ENCODE measurements at regions of chr4 and their contacts with region 1.

Region 1: DNA sequence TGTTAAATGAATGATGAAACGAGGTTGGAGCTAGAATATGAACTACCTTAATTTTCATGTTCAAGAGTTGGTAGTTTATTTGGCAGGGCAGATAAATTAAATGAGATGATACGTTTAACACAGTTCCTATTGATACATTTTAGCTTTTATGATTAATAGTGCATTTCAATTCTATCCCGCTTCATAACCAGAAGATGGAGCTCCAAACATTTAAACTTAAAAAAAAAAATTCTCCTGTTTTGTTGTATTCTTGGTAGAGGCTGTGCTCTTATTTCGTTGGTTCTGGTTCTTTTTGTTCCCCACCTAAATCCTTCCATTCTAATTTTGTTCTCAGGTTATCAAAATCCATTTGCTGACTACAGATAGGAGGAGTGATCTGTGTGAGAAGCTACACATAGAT is 71.8 kb upstream of the PTPN13 start:
- DNase-seq: no peak
- ATAC-seq: no peak
- H3K4me3 ChIP-seq: no peak overlapping the region
- H3K27ac ChIP-seq: no peak overlapping the region
- H3K4me1 ChIP-seq: no peaks in the 10 kb centered on the region
- H3K27me3 ChIP-seq: no peaks in the 10 kb centered on the region
- CTCF ChIP-seq: peak in 1 of 3 experiments; percentile 16; a peak in 1 of 6 replicates
- EP300 ChIP-seq: no peak
- POLR2A ChIP-seq: no peak
- RAD21 ChIP-seq: no peak

Region 2: DNA sequence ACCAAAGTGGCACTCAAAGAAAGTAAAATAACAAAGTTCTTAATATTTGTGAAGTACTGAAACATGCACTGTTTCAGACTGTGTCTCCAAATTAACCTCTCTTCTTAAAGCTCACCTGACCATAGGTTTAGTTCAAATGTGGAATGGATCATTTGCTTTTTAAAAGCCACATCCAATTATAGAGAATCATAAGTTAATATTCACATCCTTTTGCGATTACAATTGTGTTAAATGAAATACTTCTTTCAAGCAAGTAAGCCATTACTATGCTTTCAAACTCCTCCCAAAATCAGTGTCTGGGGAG is 23.5 kb before region 1 on chr4:
- CTCF ChIA-PET with region 1: no interaction called
- POLR2A ChIA-PET with region 1: no interaction called
- in situ Hi-C with region 1: no loop called
- intact Hi-C with region 1: no loop called
- DNase-seq: no peak
- ATAC-seq: no peak
- H3K4me3 ChIP-seq: no peak overlapping the region
- H3K27ac ChIP-seq: no peak overlapping the region
- H3K4me1 ChIP-seq: no peaks in the 10 kb centered on the region
- H3K27me3 ChIP-seq: no peaks in the 10 kb centered on the region
- CTCF ChIP-seq: no peak; a peak in 1 of 6 replicates
- EP300 ChIP-seq: no peak
- POLR2A ChIP-seq: no peak
- RAD21 ChIP-seq: no peak

Region 3: DNA sequence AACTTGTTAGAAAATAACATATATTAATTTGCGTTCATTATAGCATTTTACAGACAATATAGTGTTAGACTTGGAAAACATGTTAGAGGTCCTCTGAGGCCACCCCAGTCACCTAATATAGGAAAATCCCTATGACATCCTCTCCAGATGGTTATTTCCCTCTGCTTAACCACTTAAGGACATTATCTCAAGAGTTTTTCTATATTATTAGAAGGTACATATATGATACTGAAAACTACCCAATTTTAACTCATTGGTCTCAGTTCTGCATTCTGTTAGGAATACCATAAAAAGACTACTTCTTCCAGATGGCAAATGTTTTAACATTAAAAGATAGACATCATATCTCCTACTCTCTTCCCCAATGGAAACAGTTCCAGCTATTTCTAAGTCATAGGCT is 93.2 kb after region 1 on chr4:
- CTCF ChIA-PET with region 1: no interaction called
- POLR2A ChIA-PET with region 1: no interaction called
- in situ Hi-C with region 1: no loop called
- intact Hi-C with region 1: no loop called
- DNase-seq: no peak
- ATAC-seq: no peak
- H3K4me3 ChIP-seq: no peak overlapping the region
- H3K27ac ChIP-seq: no peak overlapping the region
- H3K4me1 ChIP-seq: no peaks in the 10 kb centered on the region
- H3K27me3 ChIP-seq: no peaks in the 10 kb centered on the region
- CTCF ChIP-seq: no peak
- EP300 ChIP-seq: no peak
- POLR2A ChIP-seq: no peak
- RAD21 ChIP-seq: no peak

Region 4: GRCh38 chr4:87043044-87043820 is 520.9 kb after region 1 on chr4:
- CTCF ChIA-PET with region 1: no interaction called
- POLR2A ChIA-PET with region 1: no interaction called
- in situ Hi-C with region 1: no loop called
- intact Hi-C with region 1: no loop called
- DNase-seq: no peak
- ATAC-seq: peak; percentile 30
- H3K4me3 ChIP-seq: no peak overlapping the region
- H3K27ac ChIP-seq: no peak overlapping the region
- H3K4me1 ChIP-seq: peaks cover 7 to 34% of the 10 kb centered on the region in 2 experiments; a peak in 4 of 5 replicates
- H3K27me3 ChIP-seq: no peaks in the 10 kb centered on the region
- CTCF ChIP-seq: no peak
- EP300 ChIP-seq: no peak
- POLR2A ChIP-seq: no peak
- RAD21 ChIP-seq: no peak

Region 5: DNA sequence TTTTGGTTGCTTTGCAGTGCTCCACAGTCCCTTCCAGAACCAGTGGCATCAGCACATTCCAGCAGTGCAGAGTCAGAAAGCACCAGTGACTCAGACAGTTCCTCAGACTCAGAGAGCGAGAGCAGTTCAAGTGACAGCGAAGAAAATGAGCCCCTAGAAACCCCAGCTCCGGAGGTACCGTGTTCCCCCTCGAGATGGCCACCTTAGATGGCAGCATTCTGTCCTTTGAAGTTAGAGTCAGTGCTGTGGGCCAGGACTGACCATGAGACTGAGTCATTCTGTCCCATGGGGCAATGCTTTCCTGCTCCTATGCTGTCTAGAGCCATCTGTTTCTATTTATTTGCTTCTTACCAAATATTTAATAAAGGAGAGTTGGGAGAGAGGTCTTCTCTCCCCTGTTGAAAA is 585.8 kb after region 1 on chr4:
- CTCF ChIA-PET with region 1: no interaction called
- POLR2A ChIA-PET with region 1: no interaction called
- in situ Hi-C with region 1: loop called (anchors 25 kb)
- intact Hi-C with region 1: no loop called
- DNase-seq: no peak
- ATAC-seq: peak; percentile 68
- H3K4me3 ChIP-seq: no peak overlapping the region
- H3K27ac ChIP-seq: no peak overlapping the region
- H3K4me1 ChIP-seq: peaks cover 0 to 7% of the 10 kb centered on the region in 2 experiments; a peak in 2 of 5 replicates
- H3K27me3 ChIP-seq: no peaks in the 10 kb centered on the region
- CTCF ChIP-seq: no peak
- EP300 ChIP-seq: no peak
- POLR2A ChIP-seq: no peak
- RAD21 ChIP-seq: no peak

Measured in K562 (cell line).